K562 (cell line): ENCODE measurements at regions of chrX and their contacts with region 1.

Region 1: GRCh38 chrX:119871599-119872395 is at the starts of genes NDUFA1 and RNF113A:
- DNase-seq: peak; percentile 77 to 94 (median 82)
- ATAC-seq: peak; percentile 94
- H3K4me3 ChIP-seq: peak within 1 kb of the TSS; percentile 94
- H3K27ac ChIP-seq: peak within 1 kb of the TSS; percentile 99
- H3K4me1 ChIP-seq: peaks cover 0 to 6% of the 10 kb centered on the region in 2 experiments; a peak in 2 of 5 replicates
- H3K27me3 ChIP-seq: no peaks in the 10 kb centered on the region
- CTCF ChIP-seq: no peak
- EP300 ChIP-seq: 0 out of 2 replicates have a peak, but pooled peaks have one; percentile 7
- POLR2A ChIP-seq: peak; percentile 91
- RAD21 ChIP-seq: no peak
- polyA plus RNA-seq, gene NDUFA1: 1,140 to 1,285 TPM
- polyA plus RNA-seq, gene RNF113A: 23.9 to 29.4 TPM

Region 2: DNA sequence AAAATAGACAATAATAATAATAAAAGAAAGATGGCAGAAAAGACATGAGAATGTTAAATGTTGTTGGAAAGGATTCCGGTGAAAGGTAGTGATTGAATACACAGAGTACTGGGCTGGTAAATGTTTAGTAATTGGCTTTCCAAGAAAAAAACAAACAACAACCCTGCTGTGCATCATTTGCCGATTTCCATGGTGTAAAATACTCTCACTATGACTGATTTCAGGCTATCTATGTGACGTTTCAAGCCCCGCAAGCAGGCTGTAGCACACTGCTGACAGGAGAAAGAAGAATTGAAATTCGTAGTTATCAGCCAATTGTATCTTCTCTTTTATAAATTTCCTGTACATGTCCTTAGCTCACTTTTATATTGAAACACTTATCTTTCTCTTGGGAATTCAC is 165.2 kb before region 1 on chrX:
- CTCF ChIA-PET with region 1: no interaction called
- POLR2A ChIA-PET with region 1: no interaction called
- in situ Hi-C with region 1: no loop called
- intact Hi-C with region 1: no loop called
- DNase-seq: no peak
- ATAC-seq: no peak
- H3K4me3 ChIP-seq: no peak overlapping the region
- H3K27ac ChIP-seq: no peak overlapping the region
- H3K4me1 ChIP-seq: no peaks in the 10 kb centered on the region; a peak in 1 of 5 replicates
- H3K27me3 ChIP-seq: no peaks in the 10 kb centered on the region
- CTCF ChIP-seq: no peak
- EP300 ChIP-seq: no peak
- POLR2A ChIP-seq: no peak
- RAD21 ChIP-seq: no peak

Region 3: GRCh38 chrX:119852382-119853353 is 19.1 kb before region 1 on chrX and contains the start of gene UPF3B:
- CTCF ChIA-PET with region 1: no interaction called
- POLR2A ChIA-PET with region 1: interaction called, 30 read pairs
- in situ Hi-C with region 1: no loop called
- intact Hi-C with region 1: loop called (anchors 2 kb)
- DNase-seq: peak; percentile 95 to 99 (median 96)
- ATAC-seq: peak; percentile 97
- H3K4me3 ChIP-seq: peak within 1 kb of the TSS; percentile 70
- H3K27ac ChIP-seq: peak within 1 kb of the TSS; percentile 76
- H3K4me1 ChIP-seq: peaks cover 0 to 2% of the 10 kb centered on the region in 2 experiments; a peak in 1 of 5 replicates
- H3K27me3 ChIP-seq: no peaks in the 10 kb centered on the region
- CTCF ChIP-seq: no peak
- EP300 ChIP-seq: no peak; the same call in 1 of the 2 replicates
- POLR2A ChIP-seq: peak; percentile 89
- RAD21 ChIP-seq: no peak
- polyA plus RNA-seq, gene UPF3B: 24.1 to 37.5 TPM